ENCODE measurements at regions of chr12 and their contacts with region 1.

Region 1: GRCh38 chr12:67241482-67241881 is 27.7 kb upstream of the CAND1 start:
- DNase-seq: no peak
- ATAC-seq: no peak
- H3K4me3 ChIP-seq: no peak overlapping the region
- H3K4me3 Mint-ChIP-seq: no peak overlapping the region
- H3K27ac ChIP-seq: no peak overlapping the region
- H3K27ac Mint-ChIP-seq: no peak overlapping the region
- H3K4me1 ChIP-seq: no peaks in the 10 kb centered on the region
- H3K4me1 Mint-ChIP-seq: no peaks in the 10 kb centered on the region
- H3K27me3 ChIP-seq: peaks cover 0 to 2% of the 10 kb centered on the region in 2 experiments
- H3K27me3 Mint-ChIP-seq: no peaks in the 10 kb centered on the region
- CTCF ChIP-seq: no peak

Region 2: GRCh38 chr12:67025543-67026114 is 215.9 kb before region 1 on chr12:
- CTCF ChIA-PET with region 1: no interaction called
- POLR2A ChIA-PET with region 1: no interaction called
- intact Hi-C with region 1: loop called in 1 of 2 experiments (anchors 10 kb)
- DNase-seq: peak; percentile 9 to 57 (median 30)
- ATAC-seq: peak; percentile 43
- H3K4me3 ChIP-seq: no peak overlapping the region
- H3K4me3 Mint-ChIP-seq: no peak overlapping the region
- H3K27ac ChIP-seq: no peak overlapping the region
- H3K27ac Mint-ChIP-seq: no peak overlapping the region
- H3K4me1 ChIP-seq: no peaks in the 10 kb centered on the region
- H3K4me1 Mint-ChIP-seq: peaks cover 5% of the 10 kb centered on the region
- H3K27me3 ChIP-seq: peaks cover 0 to 6% of the 10 kb centered on the region in 2 experiments
- H3K27me3 Mint-ChIP-seq: no peaks in the 10 kb centered on the region
- CTCF ChIP-seq: peak; percentile 83

Region 3: DNA sequence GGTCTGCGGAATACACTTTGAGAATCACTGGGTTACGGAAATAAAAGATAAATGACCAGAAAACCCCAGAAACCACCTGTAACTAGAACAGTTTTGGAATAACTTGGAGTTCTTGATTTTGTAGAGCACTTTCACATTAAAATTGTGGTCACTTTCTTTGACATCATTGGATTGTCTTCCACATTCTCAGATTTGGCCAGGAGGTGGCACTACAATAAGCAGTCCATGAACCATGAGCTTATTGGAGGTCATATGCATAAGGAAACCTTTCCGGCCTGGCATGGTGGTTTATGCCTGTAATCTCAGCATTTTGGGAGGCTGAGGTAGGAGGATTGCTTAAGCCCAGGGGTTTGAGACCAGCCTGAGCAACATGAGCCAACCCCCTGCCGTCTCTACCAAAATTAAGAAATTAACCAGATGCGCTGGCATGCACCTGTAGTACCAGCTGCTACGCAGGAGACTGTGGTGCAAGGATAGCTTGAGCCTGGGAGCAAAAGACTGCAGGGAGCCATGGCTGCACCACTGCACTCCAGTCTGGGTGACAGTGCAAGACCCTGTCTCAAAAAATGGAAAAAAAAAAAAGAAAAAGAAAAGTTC is 80.1 kb before region 1 on chr12:
- CTCF ChIA-PET with region 1: no interaction called
- POLR2A ChIA-PET with region 1: no interaction called
- intact Hi-C with region 1: no loop called
- DNase-seq: peak in 10 of 14 experiments; percentile 1 to 57 (median 22)
- ATAC-seq: peak; percentile 58
- H3K4me3 ChIP-seq: no peak overlapping the region
- H3K4me3 Mint-ChIP-seq: no peak overlapping the region
- H3K27ac ChIP-seq: no peak overlapping the region
- H3K27ac Mint-ChIP-seq: no peak overlapping the region
- H3K4me1 ChIP-seq: no peaks in the 10 kb centered on the region
- H3K4me1 Mint-ChIP-seq: no peaks in the 10 kb centered on the region
- H3K27me3 ChIP-seq: no peaks in the 10 kb centered on the region
- H3K27me3 Mint-ChIP-seq: no peaks in the 10 kb centered on the region
- CTCF ChIP-seq: peak; percentile 48

Region 4: DNA sequence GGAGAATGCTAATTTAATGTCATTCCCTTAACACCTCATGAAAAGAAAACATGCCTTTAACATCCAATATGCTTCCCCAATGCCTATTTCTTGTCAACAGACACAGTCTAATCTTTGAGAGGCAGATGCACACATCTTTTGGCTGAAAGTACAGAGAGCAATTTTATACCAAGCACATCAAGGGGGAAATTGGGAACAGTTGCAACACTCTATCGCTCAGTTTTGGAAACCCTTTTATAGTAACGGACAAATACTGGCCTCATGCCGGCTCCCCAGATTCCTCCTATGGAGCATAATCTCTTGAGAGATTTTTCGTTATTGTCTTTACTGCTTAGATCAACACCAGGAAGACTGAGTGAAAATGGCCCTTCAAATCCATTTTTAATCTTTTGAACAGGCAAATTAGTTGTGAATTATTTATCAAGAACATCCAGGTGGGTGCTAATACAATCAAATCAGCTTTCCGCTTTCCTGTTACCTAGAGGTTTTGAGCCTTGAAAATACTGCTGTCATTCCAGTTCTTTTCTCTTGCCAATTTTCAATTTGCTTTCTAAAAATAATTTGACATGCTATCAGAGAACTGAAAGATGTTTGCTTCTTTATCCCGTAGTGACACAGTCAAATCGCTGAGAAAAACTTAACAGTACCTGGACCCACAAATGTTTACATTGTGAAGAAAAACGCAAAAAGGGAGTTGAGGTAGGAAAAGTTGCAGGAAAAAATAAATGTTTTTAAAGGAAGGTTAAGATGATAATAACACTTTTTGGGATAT is 33.0 kb before region 1 on chr12:
- CTCF ChIA-PET with region 1: no interaction called
- POLR2A ChIA-PET with region 1: no interaction called
- intact Hi-C with region 1: loop called in 1 of 2 experiments (anchors 1 kb)
- DNase-seq: no peak
- ATAC-seq: no peak
- H3K4me3 ChIP-seq: no peak overlapping the region
- H3K4me3 Mint-ChIP-seq: no peak overlapping the region
- H3K27ac ChIP-seq: no peak overlapping the region
- H3K27ac Mint-ChIP-seq: no peak overlapping the region
- H3K4me1 ChIP-seq: no peaks in the 10 kb centered on the region
- H3K4me1 Mint-ChIP-seq: no peaks in the 10 kb centered on the region
- H3K27me3 ChIP-seq: peaks cover 5 to 7% of the 10 kb centered on the region in 2 experiments
- H3K27me3 Mint-ChIP-seq: peaks cover 51% of the 10 kb centered on the region
- CTCF ChIP-seq: no peak

Region 5: GRCh38 chr12:67400742-67401141 is 159.3 kb after region 1 on chr12:
- CTCF ChIA-PET with region 1: no interaction called
- POLR2A ChIA-PET with region 1: no interaction called
- intact Hi-C with region 1: no loop called
- DNase-seq: no peak
- ATAC-seq: no peak
- H3K4me3 ChIP-seq: no peak overlapping the region
- H3K4me3 Mint-ChIP-seq: no peak overlapping the region
- H3K27ac ChIP-seq: no peak overlapping the region
- H3K27ac Mint-ChIP-seq: no peak overlapping the region
- H3K4me1 ChIP-seq: no peaks in the 10 kb centered on the region
- H3K4me1 Mint-ChIP-seq: no peaks in the 10 kb centered on the region
- H3K27me3 ChIP-seq: no peaks in the 10 kb centered on the region
- H3K27me3 Mint-ChIP-seq: no peaks in the 10 kb centered on the region
- CTCF ChIP-seq: no peak

Measured in CD4-positive, alpha-beta T cell (primary cell).